A673 (cell line): ENCODE measurements at regions of chr12 and their contacts with region 1.

Region 1: GRCh38 chr12:116202940-116203339 is 74.6 kb downstream of the MED13L start:
- DNase-seq: no peak
- H3K4me3 ChIP-seq: no peak overlapping the region
- H3K27ac ChIP-seq: peak overlapping the region; percentile 29
- H3K4me1 ChIP-seq: peaks cover 49% of the 10 kb centered on the region
- H3K27me3 ChIP-seq: no peaks in the 10 kb centered on the region
- CTCF ChIP-seq: no peak

Region 2: GRCh38 chr12:116818948-116819832 is 616.2 kb after region 1 on chr12:
- CTCF ChIA-PET with region 1: no interaction called
- POLR2A ChIA-PET with region 1: interaction called, 19 read pairs
- intact Hi-C with region 1: no loop called
- DNase-seq: peak; percentile 93
- H3K4me3 ChIP-seq: peak overlapping the region; percentile 82
- H3K27ac ChIP-seq: peak overlapping the region; percentile 84
- H3K4me1 ChIP-seq: no peaks in the 10 kb centered on the region
- H3K27me3 ChIP-seq: no peaks in the 10 kb centered on the region
- CTCF ChIP-seq: no peak